ENCODE measurements at regions of chr11 and their contacts with region 1.

Region 1: DNA sequence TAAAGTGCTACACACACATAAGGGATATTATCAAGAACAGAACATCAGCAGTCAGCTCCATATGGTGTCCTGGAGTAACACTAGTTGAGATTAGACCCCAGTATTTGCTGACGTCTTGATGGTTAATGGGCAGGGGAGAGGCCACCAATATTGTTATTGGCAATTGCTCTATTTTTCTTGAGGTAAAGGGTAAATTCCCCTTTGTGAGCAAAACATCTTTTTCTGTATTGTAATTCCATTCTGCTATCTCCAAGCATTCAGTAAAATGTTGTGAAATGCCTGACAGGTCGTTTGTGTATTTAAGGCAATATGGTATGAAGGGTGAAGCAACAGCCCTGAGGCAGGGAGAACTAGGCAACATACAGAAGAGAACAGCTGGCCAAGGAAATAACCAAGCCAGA is 21.9 kb downstream of the PC start:
- DNase-seq: peak; percentile 87
- H3K4me3 ChIP-seq: no peak overlapping the region
- H3K27ac ChIP-seq: peak overlapping the region; percentile 77
- H3K27me3 ChIP-seq: no peaks in the 10 kb centered on the region
- CTCF ChIP-seq: no peak

Region 2: GRCh38 chr11:66958232-66958955 is 22.1 kb after region 1 on chr11 and contains the start of gene PC:
- CTCF ChIA-PET with region 1: interaction called, 3 read pairs
- POLR2A ChIA-PET with region 1: interaction called, 11 read pairs
- DNase-seq: peak; percentile 100
- H3K4me3 ChIP-seq: peak within 1 kb of the TSS; percentile 69
- H3K27ac ChIP-seq: peak within 1 kb of the TSS; percentile 47
- H3K27me3 ChIP-seq: no peaks in the 10 kb centered on the region
- CTCF ChIP-seq: no peak
- polyA plus RNA-seq, gene PC: 12.1 and 12.6 TPM in 2 replicates

Measured in AG04450 (cell line).